ENCODE measurements at regions of chr4 and their contacts with region 1.

Region 1: GRCh38 chr4:15238720-15239119 is 189.1 kb upstream of the C1QTNF7 start:
- DNase-seq: peak in 6 of 7 donors; percentile 34 to 49 (median 38)
- H3K4me3 ChIP-seq: no peak overlapping the region
- H3K27ac ChIP-seq: no peak overlapping the region
- H3K4me1 ChIP-seq: peaks cover 0 to 10% of the 10 kb centered on the region in 2 donors
- H3K27me3 ChIP-seq: no peaks in the 10 kb centered on the region
- CTCF ChIP-seq: peak; percentile 50 to 75 (median 60)
- POLR2A ChIP-seq: no peak

Region 2: DNA sequence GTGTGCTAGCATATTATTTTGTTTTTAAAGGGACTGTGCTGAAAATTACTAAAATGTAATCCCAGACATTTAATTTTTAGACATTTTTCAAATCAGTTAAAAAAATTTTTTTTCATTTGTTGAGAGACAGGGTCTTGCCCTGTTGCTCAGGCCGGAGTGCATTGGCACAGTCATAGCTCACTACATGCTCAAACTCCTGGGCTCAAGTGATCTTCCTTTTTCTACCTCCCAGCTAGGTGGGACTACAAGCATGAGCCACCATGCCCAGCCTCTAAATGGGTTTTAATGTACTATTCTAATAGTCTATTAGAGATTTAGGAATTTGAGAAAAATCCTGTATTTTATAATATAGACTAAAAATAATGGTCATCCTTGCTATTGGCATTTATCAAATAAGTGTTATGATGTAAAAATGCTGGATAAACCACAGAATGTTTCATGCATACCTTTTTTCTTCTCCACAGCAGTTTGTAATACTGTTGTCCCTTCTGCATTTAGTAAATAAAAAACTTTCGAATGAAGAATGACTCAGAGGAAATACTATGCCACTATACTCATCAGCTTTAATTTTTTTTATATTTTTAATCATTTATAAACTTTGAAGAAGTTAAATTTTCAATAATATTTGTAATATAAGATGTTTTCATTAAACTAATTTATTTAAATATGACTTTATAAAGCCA is 206.6 kb before region 1 on chr4:
- intact Hi-C with region 1: no loop called
- DNase-seq: no peak
- H3K4me3 ChIP-seq: no peak overlapping the region
- H3K27ac ChIP-seq: no peak overlapping the region
- H3K4me1 ChIP-seq: peaks cover 16 to 45% of the 10 kb centered on the region in 2 donors
- H3K27me3 ChIP-seq: no peaks in the 10 kb centered on the region
- CTCF ChIP-seq: no peak
- POLR2A ChIP-seq: no peak

Region 3: DNA sequence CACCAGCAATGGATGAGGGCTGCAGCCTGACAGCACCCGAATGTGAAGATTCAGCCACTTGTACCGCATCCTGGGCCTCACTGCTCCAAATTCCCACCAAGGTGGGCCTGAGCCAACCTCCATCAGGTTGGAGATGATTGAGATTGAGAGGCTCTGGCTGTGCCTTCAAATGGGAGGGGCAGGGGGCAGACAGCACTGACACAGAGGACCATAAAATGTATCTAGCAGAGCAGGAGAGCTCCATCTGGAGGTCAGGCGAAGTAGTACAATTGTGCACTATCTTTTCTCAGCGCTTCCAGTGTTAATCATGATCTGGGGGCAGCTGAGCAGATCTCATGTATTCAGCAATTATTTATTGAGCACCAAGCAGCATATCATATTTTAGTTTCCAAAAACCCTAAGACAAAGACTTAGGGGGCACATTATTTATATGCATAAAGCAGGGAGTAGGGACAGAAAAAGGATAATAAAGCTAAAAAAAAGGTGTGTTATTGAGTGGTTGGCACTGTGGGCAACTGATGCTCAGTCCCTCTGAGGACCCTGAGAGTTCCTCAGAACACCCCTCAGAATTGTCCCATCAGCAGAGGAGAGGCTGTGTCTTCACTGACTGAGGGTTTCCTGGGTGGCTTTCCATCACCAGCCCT is 157.6 kb after region 1 on chr4:
- intact Hi-C with region 1: loop called (anchors 5 to 10 kb)
- DNase-seq: peak in 6 of 7 donors; percentile 40 to 75 (median 49)
- H3K4me3 ChIP-seq: no peak overlapping the region
- H3K27ac ChIP-seq: no peak overlapping the region
- H3K4me1 ChIP-seq: peaks cover 4 to 15% of the 10 kb centered on the region in 2 donors
- H3K27me3 ChIP-seq: no peaks in the 10 kb centered on the region
- CTCF ChIP-seq: peak; percentile 48 to 68 (median 60)
- POLR2A ChIP-seq: no peak

Region 4: GRCh38 chr4:15457406-15458201 is 218.9 kb after region 1 on chr4:
- intact Hi-C with region 1: loop called (anchors 5 kb)
- DNase-seq: no peak
- H3K4me3 ChIP-seq: no peak overlapping the region
- H3K27ac ChIP-seq: peak overlapping the region in 2 of 5 donors; percentile 30 to 42
- H3K4me1 ChIP-seq: peaks cover 3 to 8% of the 10 kb centered on the region in 2 donors
- H3K27me3 ChIP-seq: no peaks in the 10 kb centered on the region
- CTCF ChIP-seq: peak; percentile 76 to 81 (median 78)
- POLR2A ChIP-seq: no peak